ENCODE measurements at regions of chr5 and their contacts with region 1.

Region 1: GRCh38 chr5:41281215-41281810 is 68.0 kb upstream of the C6 start:
- DNase-seq: no peak
- H3K4me3 ChIP-seq: no peak overlapping the region
- H3K27ac ChIP-seq: no peak overlapping the region
- H3K4me1 ChIP-seq: no peaks in the 10 kb centered on the region
- H3K27me3 ChIP-seq: no peaks in the 10 kb centered on the region
- CTCF ChIP-seq: no peak
- POLR2A ChIP-seq: no peak

Region 2: GRCh38 chr5:40383749-40384651 is 897.3 kb before region 1 on chr5:
- intact Hi-C with region 1: no loop called
- DNase-seq: no peak
- H3K4me3 ChIP-seq: no peak overlapping the region
- H3K27ac ChIP-seq: no peak overlapping the region
- H3K4me1 ChIP-seq: no peaks in the 10 kb centered on the region
- H3K27me3 ChIP-seq: no peaks in the 10 kb centered on the region
- CTCF ChIP-seq: no peak
- POLR2A ChIP-seq: no peak

Region 3: DNA sequence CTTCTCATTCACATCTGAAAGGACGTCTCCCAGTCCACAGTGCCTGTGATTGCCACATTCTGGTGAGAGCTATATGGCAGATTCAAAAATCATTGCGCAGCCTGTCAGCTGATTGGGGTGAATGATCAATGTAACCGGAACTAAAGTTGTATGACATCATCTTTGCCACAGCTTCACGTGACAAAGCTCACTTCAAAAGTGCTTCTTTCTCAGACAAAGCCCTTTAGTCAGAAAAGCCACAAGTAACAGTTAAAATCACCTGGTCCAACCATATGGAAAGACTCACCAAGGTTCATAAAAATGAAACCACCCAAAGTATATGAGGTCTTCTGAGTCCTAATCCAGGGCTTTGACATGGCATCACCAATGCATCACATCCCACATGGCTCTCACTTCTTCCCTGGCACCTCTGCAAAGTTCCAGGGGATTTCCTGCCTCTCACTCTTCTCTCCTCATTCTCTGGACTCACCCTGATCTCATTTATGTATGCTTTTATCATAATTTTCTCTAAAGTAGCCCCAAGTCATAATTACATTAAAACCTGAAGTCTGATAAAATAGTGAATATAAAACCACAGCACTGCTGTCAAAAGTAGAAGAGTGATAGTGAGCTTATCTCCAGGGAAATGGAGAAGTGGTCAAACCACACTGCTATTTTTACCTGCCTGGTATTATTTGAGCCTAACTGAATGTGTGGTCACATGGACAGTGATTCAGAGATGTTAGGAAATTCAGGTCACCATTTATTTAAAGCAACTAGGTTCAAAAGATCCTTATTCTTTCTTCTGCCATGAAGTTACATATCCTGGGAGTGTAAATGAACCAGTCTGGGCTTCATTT is 794.7 kb before region 1 on chr5:
- intact Hi-C with region 1: loop called (anchors 10 kb)
- DNase-seq: no peak
- H3K4me3 ChIP-seq: no peak overlapping the region
- H3K27ac ChIP-seq: no peak overlapping the region
- H3K4me1 ChIP-seq: no peaks in the 10 kb centered on the region
- H3K27me3 ChIP-seq: no peaks in the 10 kb centered on the region
- CTCF ChIP-seq: no peak
- POLR2A ChIP-seq: no peak

Measured in breast epithelium (tissue), 4 donors.